ENCODE measurements at regions of chr11 and their contacts with region 1.

Region 1: DNA sequence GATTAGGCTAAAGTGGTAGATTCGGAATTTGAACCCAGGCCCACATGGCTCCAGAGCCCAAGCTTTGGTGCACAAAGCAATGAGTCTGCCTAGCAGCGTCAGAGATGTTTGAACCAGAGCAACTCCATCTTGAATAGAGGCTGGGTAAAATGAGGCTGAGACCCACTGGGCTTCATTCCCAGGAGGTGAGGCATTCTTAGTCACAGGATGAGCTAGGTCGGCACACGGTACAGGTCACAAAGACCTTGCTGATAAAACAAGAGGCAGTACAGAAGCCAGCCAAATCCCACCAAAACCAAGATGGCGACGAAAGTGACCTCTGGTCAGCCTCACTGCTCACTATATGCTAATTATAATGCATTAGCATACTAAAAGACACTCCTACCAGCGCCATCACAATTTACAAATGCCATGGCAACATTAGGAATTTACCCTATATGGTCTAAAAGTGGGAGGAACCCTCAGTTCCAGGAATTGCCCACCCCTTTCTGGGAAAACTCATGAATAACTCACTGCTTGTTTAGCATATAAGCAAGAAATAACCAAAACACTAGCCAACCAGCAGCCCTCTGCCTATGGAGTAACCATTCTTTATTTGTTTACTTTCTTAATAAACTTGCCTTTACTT is 40.3 kb upstream of the DAGLA start:
- DNase-seq: no peak
- ATAC-seq: no peak
- H3K4me3 Mint-ChIP-seq: no peak overlapping the region
- H3K27ac Mint-ChIP-seq: no peak overlapping the region
- H3K4me1 Mint-ChIP-seq: 0 out of 2 replicates have a peak, but pooled peaks cover 6% of the 10 kb centered on the region
- H3K27me3 Mint-ChIP-seq: no peaks in the 10 kb centered on the region
- CTCF ChIP-seq: no peak

Region 2: GRCh38 chr11:61325649-61326414 is 314.1 kb before region 1 on chr11:
- CTCF ChIA-PET with region 1: no interaction called
- POLR2A ChIA-PET with region 1: no interaction called
- DNase-seq: no peak
- ATAC-seq: no peak
- H3K4me3 Mint-ChIP-seq: no peak overlapping the region
- H3K27ac Mint-ChIP-seq: no peak overlapping the region; the same call in 1 of the 2 replicates
- H3K4me1 Mint-ChIP-seq: no peaks in the 10 kb centered on the region; the same call in 1 of the 2 replicates
- H3K27me3 Mint-ChIP-seq: no peaks in the 10 kb centered on the region
- CTCF ChIP-seq: no peak

Region 3: GRCh38 chr11:61446211-61446651 is 193.7 kb before region 1 on chr11:
- CTCF ChIA-PET with region 1: interaction called, 51 read pairs
- POLR2A ChIA-PET with region 1: interaction called, 3 read pairs
- DNase-seq: peak; percentile 95
- ATAC-seq: peak; percentile 93
- H3K4me3 Mint-ChIP-seq: no peak overlapping the region
- H3K27ac Mint-ChIP-seq: peak overlapping the region; percentile 82; the same call in 1 of the 2 replicates
- H3K4me1 Mint-ChIP-seq: no peaks in the 10 kb centered on the region
- H3K27me3 Mint-ChIP-seq: no peaks in the 10 kb centered on the region
- CTCF ChIP-seq: peak; percentile 47

Region 4: GRCh38 chr11:61516675-61517572 is 123.0 kb before region 1 on chr11:
- CTCF ChIA-PET with region 1: interaction called, 36 read pairs
- POLR2A ChIA-PET with region 1: no interaction called
- DNase-seq: peak; percentile 85
- ATAC-seq: peak; percentile 43
- H3K4me3 Mint-ChIP-seq: peak overlapping the region; percentile 45
- H3K27ac Mint-ChIP-seq: peak overlapping the region; percentile 57; the same call in 1 of the 2 replicates
- H3K4me1 Mint-ChIP-seq: peaks cover 48% of the 10 kb centered on the region
- H3K27me3 Mint-ChIP-seq: peaks cover 9% of the 10 kb centered on the region; the same call in 1 of the 2 replicates
- CTCF ChIP-seq: peak; percentile 100

Region 5: GRCh38 chr11:61581030-61581928 is 58.7 kb before region 1 on chr11 and contains the start of gene SYT7:
- CTCF ChIA-PET with region 1: interaction called, 52 read pairs
- POLR2A ChIA-PET with region 1: no interaction called
- DNase-seq: peak; percentile 99
- ATAC-seq: peak; percentile 83
- H3K4me3 Mint-ChIP-seq: peak within 1 kb of the TSS; percentile 79
- H3K27ac Mint-ChIP-seq: no peak within 1 kb of the TSS
- H3K4me1 Mint-ChIP-seq: peaks cover 56% of the 10 kb centered on the region
- H3K27me3 Mint-ChIP-seq: peaks cover 61% of the 10 kb centered on the region
- CTCF ChIP-seq: no peak; the same call in 1 of the 2 replicates
- total RNA-seq, gene SYT7: 12.5 to 18.9 TPM (median 18.2 TPM) in 3 replicates

Region 6: GRCh38 chr11:61627567-61628445 is 12.1 kb before region 1 on chr11:
- CTCF ChIA-PET with region 1: interaction called, 61 read pairs
- POLR2A ChIA-PET with region 1: no interaction called
- DNase-seq: peak; percentile 87
- ATAC-seq: peak; percentile 79
- H3K4me3 Mint-ChIP-seq: no peak overlapping the region
- H3K27ac Mint-ChIP-seq: peak overlapping the region; percentile 70
- H3K4me1 Mint-ChIP-seq: peaks cover 50% of the 10 kb centered on the region
- H3K27me3 Mint-ChIP-seq: no peaks in the 10 kb centered on the region
- CTCF ChIP-seq: peak; percentile 92

Region 7: DNA sequence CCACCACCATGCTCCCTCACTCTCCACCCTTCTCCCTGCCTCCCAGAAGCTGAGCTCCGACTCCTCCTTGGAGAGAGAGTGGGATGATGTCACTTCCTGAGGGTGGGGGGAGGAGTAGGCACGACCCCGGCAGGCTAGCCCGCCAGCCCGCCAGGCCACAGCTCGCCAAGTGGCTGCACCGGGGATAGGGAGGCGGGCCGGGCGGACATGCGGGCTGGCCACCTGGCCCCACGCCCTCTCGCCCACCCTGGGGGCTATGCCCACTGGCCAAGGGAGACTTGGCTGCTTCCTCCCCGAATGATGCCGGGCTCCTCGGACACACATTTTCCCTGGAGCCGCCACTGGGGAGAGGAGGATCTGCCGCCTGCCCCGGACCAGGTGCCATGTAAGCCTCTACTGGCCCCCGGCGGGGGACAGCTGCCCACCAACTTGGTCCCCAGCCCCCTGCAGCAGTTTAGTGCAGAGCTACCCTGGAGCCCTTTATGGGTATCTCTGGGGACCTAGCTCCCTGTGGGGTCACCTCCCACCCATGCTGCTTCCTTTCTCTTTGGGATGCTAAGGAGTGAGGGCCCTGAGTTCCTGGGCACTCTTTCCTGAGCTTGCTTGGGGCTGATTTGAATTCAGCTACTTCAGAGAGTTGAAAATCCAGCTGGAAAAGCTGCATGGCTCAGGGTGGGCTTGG is 78.8 kb after region 1 on chr11:
- CTCF ChIA-PET with region 1: interaction called, 10 read pairs
- POLR2A ChIA-PET with region 1: no interaction called
- DNase-seq: peak; percentile 73
- ATAC-seq: peak; percentile 79
- H3K4me3 Mint-ChIP-seq: peak overlapping the region; percentile 61
- H3K27ac Mint-ChIP-seq: peak overlapping the region; percentile 32; the same call in 1 of the 2 replicates
- H3K4me1 Mint-ChIP-seq: peaks cover 36% of the 10 kb centered on the region
- H3K27me3 Mint-ChIP-seq: peaks cover 3% of the 10 kb centered on the region; the same call in 1 of the 2 replicates
- CTCF ChIP-seq: no peak

Region 8: GRCh38 chr11:61912530-61912898 is 272.6 kb after region 1 on chr11:
- CTCF ChIA-PET with region 1: no interaction called
- POLR2A ChIA-PET with region 1: no interaction called
- DNase-seq: peak; percentile 2
- ATAC-seq: no peak
- H3K4me3 Mint-ChIP-seq: no peak overlapping the region
- H3K27ac Mint-ChIP-seq: no peak overlapping the region; the same call in 1 of the 2 replicates
- H3K4me1 Mint-ChIP-seq: peaks cover 19% of the 10 kb centered on the region
- H3K27me3 Mint-ChIP-seq: peaks cover 17% of the 10 kb centered on the region
- CTCF ChIP-seq: no peak